ENCODE measurements at regions of chr22 and their contacts with region 1.

Region 1: GRCh38 chr22:23925020-23925606 is 30.9 kb downstream of the MIF start:
- DNase-seq: no peak
- H3K4me3 ChIP-seq: no peak overlapping the region
- H3K27ac ChIP-seq: no peak overlapping the region
- H3K4me1 ChIP-seq: no peaks in the 10 kb centered on the region
- H3K27me3 ChIP-seq: no peaks in the 10 kb centered on the region
- CTCF ChIP-seq: no peak

Region 2: DNA sequence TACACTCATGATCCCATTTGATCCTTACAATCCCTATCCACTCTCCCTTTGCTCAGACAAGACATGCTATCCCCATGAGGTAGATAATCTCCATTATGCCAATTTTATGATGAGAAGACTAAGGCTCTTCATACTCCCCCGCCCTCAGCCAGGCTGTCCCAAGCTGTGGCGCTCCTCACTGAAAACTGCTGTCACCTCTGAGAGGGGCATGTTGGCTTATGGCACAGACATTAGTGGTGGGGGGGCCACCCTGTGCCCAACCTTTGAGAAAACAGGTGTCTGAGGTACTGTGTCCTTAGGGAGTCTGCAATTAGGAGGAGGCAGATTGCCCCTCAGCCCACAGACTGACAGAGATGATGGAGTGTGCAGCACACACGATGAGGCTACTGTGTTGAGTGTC is 44.0 kb after region 1 on chr22:
- intact Hi-C with region 1: loop called (anchors 5 kb)
- DNase-seq: no peak
- H3K4me3 ChIP-seq: no peak overlapping the region
- H3K27ac ChIP-seq: no peak overlapping the region
- H3K4me1 ChIP-seq: peaks cover 24% of the 10 kb centered on the region
- H3K27me3 ChIP-seq: no peaks in the 10 kb centered on the region
- CTCF ChIP-seq: no peak

Measured in left ventricle myocardium inferior (tissue), 1 donor.